PC-9 (cell line): ENCODE measurements at regions of chr19 and their contacts with region 1.

Region 1: DNA sequence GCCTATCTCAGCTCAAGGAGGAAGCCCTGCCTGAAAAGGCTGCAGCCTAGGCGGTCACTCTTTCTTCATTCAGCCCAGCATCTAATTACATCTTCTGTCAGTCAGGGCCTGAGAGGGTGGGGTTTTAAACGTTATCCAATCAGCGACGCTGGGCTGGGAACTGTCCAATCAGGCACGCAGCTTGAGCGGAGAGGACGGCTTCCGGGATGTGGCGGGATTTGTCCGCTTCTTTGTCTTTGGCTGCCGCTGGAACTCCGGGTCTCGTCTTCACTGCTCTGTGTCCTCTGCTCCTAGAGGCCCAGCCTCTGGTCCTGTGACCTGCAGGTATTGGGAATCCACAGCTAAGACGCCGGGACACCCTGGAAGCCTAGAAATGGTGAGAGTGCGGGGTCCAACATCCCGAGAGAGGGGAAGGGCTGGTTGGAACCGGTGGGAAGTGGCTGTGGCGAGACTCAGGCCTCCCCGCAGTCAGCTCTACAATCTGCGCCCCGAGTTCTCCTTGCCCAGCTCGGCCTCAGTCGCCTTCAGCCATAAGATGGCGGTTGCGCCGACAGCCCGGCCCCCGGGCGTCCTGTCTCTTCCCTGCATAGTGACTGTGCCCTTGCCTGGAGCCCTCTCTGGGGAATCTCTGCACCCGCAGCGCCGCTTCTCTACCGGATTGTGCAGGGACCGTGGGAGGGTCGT is at the start of gene ZNF738:
- DNase-seq: peak; percentile 88 to 94
- H3K4me3 ChIP-seq: peak within 1 kb of the TSS; percentile 89
- H3K27ac ChIP-seq: peak within 1 kb of the TSS; percentile 39; the same call in 1 of the 2 replicates
- H3K4me1 ChIP-seq: peaks cover 9% of the 10 kb centered on the region; the same call in 1 of the 2 replicates
- H3K27me3 ChIP-seq: no peaks in the 10 kb centered on the region
- CTCF ChIP-seq: no peak
- total RNA-seq, gene ZNF738: 11.9 and 14.0 TPM in 2 replicates

Region 2: DNA sequence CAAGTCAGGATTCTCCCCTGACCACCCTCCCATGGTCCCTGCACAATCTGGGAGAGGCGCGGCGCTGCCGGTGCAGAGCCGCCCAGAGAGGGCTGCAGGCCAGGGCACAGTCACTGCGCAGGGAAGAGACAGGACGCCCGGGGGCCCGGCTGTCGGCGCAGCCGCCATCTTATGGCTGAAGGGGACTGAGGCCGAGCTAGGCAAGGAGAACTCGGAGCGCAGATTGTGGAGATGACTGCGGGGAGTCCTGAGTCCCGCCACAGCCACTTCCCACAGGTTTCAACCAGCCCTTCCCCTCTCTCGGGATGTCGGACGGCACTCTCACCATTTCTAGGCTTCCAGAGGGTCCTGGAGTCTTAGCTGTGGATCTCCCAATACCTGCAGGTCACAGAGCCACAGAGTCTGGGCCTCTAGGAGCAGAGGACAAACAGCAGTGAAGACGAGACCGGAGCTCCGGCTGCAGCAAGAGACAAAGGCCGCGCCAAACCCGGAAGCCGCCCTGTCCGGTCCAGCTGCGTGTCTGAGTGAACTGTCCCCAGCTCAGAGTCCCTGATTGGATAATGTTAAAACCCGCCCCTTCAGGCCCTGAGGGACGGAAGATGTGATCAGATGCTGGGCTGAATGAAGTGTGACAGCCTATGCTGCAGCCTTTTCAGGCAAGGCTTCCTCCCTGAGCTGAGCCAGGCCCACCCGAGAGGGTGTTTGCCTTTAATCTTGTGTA is 29.9 kb before region 1 on chr19 and contains the start of gene ZNF708:
- CTCF ChIA-PET with region 1: no interaction called
- POLR2A ChIA-PET with region 1: interaction called, 3 read pairs
- intact Hi-C with region 1: loop called (anchors 2 kb)
- DNase-seq: peak; percentile 82 to 83
- H3K4me3 ChIP-seq: peak within 1 kb of the TSS; percentile 79
- H3K27ac ChIP-seq: peak within 1 kb of the TSS; percentile 57
- H3K4me1 ChIP-seq: peaks cover 7% of the 10 kb centered on the region
- H3K27me3 ChIP-seq: no peaks in the 10 kb centered on the region
- CTCF ChIP-seq: no peak
- total RNA-seq, gene ZNF708: 2.5 and 4.2 TPM in 2 replicates

Region 3: DNA sequence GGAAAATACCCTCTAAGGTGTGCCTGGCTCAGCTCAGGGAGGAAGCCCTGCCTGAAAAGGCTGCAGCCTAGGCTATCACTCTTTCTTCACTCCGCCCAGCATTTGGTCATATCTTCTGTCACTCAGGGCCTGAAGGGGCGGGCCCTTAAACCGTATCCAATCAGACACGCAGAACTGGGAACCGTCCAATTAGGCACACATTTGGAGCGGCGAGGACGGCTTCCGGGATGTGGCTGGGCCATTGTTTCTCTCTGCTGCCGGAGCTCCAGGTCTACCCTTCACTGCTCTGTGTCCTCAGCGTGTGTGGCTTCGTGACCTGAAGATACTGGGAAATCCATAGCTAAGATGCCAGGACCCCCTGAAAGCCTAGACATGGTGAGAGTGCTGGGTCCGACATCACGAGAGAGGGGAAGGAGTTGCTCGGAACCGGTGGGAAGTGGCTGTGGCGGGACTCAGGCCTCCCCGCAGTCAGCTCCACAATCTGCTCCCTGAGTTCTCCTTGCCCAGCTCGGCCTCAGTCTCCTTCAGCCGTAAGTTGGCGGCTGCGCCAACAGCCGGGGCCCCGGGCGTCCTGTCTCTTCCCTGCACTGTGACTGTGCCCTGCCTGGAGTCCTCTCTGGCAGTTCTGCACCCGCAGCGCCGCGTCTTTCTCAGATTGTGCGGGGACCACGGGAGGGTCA is 38.1 kb after region 1 on chr19 and contains the start of gene ZNF493:
- CTCF ChIA-PET with region 1: no interaction called
- POLR2A ChIA-PET with region 1: no interaction called
- intact Hi-C with region 1: loop called (anchors 2 kb)
- DNase-seq: peak; percentile 92 to 93
- H3K4me3 ChIP-seq: peak within 1 kb of the TSS; percentile 91
- H3K27ac ChIP-seq: no peak within 1 kb of the TSS
- H3K4me1 ChIP-seq: peaks cover 10% of the 10 kb centered on the region; the same call in 1 of the 2 replicates
- H3K27me3 ChIP-seq: no peaks in the 10 kb centered on the region
- CTCF ChIP-seq: no peak
- total RNA-seq, gene ZNF493: 14.5 and 16.6 TPM in 2 replicates